ENCODE measurements at regions of chr6 and their contacts with region 1.

Region 1: DNA sequence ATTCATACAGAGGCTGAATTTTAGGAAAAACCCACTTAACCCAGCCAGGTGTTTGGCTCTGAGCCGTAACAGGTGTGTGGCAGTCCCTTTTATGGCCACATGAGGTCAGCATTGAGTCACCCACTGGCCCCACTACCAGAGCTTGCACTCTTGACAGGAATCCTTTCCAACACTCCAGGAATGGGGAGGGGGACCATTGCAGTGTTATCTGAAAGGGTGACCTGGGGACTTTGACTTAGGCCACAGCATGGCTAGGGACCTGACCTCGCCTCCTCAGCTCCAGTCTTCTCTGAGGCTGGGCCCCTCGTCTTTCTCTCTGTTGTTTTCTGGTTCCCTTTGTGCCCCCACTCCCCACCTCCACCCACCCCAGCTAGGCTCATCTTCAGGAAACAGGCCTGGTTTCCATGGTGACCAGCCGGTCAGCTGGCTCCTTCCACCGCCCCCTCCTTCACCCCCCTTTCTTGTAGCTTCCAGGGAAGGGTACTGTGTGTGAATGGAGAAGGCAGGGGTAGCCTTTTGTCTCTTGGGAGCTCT is 2.1 kb upstream of the TMEM151B start:
- DNase-seq: peak; percentile 68
- H3K4me3 ChIP-seq: no peak overlapping the region
- H3K27ac ChIP-seq: no peak overlapping the region
- H3K4me1 ChIP-seq: no peaks in the 10 kb centered on the region
- H3K27me3 ChIP-seq: peaks cover 32% of the 10 kb centered on the region
- CTCF ChIP-seq: peak; percentile 88

Region 2: DNA sequence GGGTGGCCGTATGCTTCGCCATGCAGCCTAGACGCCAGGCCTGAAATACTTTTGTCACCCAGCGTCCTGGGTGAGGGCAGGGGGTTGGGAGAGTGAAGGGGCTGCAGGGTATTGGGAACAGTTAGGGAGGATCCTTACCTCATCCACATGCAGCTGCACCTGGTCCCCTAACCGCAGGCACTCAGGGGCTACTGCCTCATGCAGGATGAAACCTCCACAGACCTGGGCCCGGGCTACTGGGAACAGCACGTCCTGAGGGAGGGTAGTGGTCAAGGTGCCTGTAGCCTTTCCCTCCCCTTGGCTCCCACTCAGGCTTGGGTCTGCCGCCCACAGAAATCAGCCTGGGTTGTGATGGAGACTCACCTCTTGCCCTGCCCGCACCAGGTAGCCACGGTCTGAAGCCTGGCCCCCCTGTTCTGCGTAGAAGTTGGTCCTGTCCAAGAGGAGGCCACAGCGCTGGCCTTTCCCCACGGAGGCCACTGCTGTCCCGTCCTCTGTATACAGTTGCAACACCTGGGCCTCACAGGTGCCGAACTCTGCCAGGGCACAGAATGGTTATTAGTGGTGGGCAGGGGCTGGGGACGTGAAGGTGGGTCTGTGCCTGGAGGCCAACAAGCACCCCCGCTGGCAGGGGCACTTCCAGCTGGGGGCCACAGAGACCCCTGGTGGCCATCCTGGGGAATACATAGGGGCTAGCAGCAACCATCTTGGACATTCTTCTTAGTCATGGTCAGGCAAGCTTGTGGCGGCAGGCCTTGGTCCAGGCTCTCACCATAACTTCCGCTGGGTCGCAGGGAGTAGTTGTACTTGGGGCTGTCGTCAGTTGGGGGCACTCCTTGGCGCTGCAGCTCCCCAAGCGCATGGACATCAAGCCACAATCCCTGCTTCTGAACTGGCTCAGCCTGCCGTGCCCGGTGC is 36.4 kb after region 1 on chr6:
- intact Hi-C with region 1: loop called (anchors 2 kb)
- DNase-seq: no peak
- H3K4me3 ChIP-seq: no peak overlapping the region
- H3K27ac ChIP-seq: no peak overlapping the region
- H3K4me1 ChIP-seq: no peaks in the 10 kb centered on the region
- H3K27me3 ChIP-seq: no peaks in the 10 kb centered on the region
- CTCF ChIP-seq: peak; percentile 72

Region 3: DNA sequence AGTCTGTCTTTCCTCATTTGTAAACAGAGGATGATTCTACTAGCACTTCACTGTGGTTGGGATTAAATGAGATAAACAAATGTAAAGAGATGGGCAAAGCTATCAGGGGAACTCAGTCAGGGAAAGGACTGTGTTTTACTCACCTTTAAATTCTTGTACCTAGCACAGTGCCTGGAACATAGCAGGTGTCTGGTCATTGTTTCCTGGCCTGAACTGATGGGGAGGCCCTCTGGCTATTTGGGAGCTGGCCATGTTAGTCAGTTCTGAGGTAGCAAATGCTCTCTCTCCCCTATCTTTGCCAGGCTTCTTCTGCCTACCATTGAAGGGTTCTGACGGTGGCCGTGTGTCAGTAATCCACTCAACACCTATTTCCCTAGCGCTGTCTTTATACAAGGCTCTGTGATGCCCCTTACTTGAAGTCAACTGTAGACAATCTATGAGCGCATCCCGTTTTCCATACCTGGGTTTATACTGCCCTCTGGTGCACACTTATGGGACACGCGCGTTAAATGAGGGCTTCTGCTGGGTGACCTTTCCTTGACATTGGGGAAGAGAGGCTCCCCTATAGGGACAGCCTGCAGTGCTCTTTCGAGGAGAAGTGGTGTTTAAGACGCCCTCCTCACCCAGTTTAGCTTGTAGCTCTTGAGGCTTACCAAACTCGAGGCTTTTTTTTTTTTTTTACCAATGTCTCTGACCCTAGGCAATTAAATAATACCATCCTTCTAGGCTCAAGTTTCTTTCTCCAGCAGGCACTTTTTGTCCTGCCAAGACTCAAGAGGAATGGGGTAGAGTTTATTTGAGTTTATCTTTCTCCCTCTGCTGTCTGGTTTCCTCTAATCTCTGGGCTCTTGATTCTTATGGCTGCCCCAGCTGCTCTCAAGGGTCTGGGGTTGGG is 70.3 kb after region 1 on chr6:
- intact Hi-C with region 1: loop called (anchors 2 kb)
- DNase-seq: peak; percentile 68
- H3K4me3 ChIP-seq: no peak overlapping the region
- H3K27ac ChIP-seq: no peak overlapping the region
- H3K4me1 ChIP-seq: no peaks in the 10 kb centered on the region
- H3K27me3 ChIP-seq: peaks cover 9% of the 10 kb centered on the region
- CTCF ChIP-seq: peak; percentile 52

Region 4: DNA sequence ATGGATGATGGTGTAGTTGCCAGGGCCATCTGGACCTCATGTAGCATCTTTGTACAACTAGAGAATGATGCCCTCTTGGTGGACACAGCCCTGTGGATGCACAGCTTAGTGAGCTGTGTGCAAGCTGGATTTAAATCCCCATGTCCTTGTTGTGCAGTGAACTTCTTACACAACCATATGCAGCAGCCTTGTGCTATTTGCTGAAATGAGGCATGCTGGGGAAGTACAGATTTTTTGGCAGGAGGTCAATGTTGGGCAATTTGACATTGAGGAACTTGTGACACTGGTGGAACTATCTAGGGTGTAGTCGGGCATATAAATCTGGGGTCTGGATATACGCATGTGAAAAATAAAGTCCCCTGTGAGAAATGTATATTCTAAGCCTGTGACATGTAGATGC is 113.6 kb after region 1 on chr6:
- intact Hi-C with region 1: no loop called
- DNase-seq: no peak
- H3K4me3 ChIP-seq: no peak overlapping the region
- H3K27ac ChIP-seq: no peak overlapping the region
- H3K4me1 ChIP-seq: no peaks in the 10 kb centered on the region
- H3K27me3 ChIP-seq: no peaks in the 10 kb centered on the region
- CTCF ChIP-seq: no peak